IMR-90 (cell line): ENCODE measurements at regions of chr7 and their contacts with region 1.

Region 1: DNA sequence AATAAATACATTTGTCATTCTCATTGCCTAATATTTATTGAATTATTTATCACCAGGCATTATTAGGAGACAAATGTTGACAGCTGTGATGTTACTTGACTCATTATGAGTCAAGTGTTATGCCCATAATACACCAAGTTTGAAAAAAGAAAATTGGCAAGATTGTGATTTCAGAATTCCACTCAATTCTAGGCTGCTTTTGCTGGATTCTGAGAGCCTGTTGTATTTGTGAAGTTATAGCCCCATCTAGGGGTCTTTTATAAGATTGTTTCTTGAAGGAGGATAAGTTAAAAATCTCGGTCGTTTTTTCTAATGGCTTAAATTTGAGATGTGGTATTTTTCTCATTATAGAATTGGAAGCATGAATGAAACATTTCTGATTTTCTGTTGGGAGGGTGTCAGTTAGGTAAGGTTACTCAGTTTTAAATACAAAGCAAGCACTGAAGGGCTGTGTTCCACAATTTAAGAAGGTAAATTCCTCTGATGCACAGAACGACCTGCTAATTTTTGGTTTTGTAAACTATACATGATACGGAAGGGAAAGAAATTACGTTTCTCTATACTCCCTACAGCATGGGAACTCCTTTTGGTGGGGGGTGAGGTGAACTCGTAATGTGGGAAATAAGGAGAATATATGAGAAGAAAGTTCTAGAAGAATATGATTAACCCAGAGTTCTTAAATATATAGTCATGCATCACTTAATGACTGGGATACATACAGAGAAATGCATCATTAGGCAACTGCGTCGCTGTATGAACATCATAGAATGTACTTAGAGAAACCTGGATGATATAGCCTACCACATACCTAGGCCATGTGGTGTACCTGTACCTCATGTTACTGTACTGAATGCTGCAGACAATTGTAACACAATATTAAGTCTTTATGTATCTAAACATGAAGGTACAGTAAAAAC is 2.6 kb downstream of the STK31 start:
- DNase-seq: peak; percentile 78
- ATAC-seq: peak; percentile 24; the same call in 1 of the 2 replicates
- H3K4me3 ChIP-seq: no peak overlapping the region
- H3K27ac ChIP-seq: no peak overlapping the region
- H3K4me1 ChIP-seq: peaks cover 2% of the 10 kb centered on the region; the same call in 1 of the 2 replicates
- H3K27me3 ChIP-seq: no peaks in the 10 kb centered on the region
- CTCF ChIP-seq: peak; percentile 87
- POLR2A ChIP-seq: no peak
- RAD21 ChIP-seq: peak; percentile 92

Region 2: DNA sequence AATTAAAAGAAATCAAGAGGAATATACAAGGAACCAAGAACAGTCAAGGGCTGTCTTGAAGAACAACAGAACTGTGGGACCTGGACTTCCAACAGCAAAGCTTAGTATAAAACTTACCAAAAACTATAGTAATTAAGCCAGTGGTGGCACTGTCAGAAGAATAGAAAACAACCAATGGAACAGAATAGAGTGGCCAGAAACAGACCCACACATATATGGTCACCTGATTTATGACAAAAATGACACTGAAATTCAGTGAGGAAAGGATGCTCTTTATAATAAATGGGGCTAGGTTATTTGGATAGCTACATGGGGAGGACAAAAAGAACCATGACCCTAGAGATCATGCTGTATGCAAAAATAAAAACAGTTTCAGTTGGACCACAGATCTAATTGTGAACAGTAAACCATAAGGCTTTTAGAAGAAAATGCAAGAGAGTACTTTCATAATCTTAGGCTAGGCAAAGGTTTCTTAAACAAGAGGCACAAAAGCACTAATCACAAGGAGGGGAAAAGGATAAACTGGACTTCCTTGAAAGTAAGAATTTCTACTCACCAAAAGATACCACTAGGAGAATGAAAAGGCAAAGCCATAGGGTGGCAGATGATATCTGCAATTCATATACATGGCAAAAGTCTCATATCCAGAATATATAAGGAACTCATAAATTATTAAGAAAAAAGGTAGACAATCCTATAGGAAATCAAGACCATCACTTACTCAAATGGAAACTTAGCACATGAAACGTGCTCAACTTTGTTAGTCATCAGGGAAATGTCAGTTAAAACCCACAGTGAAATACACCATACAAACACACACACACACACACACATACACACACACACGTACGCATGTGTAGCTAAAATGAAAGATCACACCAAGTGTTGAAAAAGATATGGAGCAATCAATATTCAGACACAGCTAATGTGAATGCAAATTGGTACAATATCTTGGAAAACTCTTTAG is 719.5 kb before region 1 on chr7:
- CTCF ChIA-PET with region 1: no interaction called
- POLR2A ChIA-PET with region 1: no interaction called
- dilution Hi-C with region 1: no loop called
- in situ Hi-C with region 1: no loop called
- intact Hi-C with region 1: no loop called
- DNase-seq: no peak
- ATAC-seq: no peak
- H3K4me3 ChIP-seq: no peak overlapping the region
- H3K27ac ChIP-seq: no peak overlapping the region
- H3K4me1 ChIP-seq: peaks cover 3% of the 10 kb centered on the region; the same call in 1 of the 2 replicates
- H3K27me3 ChIP-seq: no peaks in the 10 kb centered on the region
- CTCF ChIP-seq: no peak
- POLR2A ChIP-seq: no peak
- RAD21 ChIP-seq: no peak

Region 3: DNA sequence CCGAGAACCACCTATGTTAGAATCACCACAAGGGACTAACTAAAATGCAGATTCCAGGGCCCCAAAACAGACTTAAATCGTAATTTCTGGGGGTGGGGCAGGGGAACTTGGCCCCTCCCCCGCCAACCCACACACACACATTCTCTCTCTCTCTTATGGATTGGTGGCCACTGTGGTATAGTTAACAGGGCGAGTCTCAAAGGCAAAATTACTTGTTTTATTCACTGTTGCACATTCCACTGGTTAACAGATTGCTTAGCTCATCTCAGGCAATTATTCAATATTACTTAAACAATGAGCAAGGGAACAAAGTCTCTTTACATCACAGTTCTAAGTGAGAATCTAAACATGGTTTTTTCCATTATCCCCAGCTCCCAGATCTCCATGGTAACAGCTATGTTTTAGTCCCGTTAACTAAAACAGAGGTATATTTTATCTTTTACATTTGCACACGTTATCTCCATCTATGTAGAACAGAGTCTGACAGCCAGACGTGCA is 280.9 kb before region 1 on chr7:
- CTCF ChIA-PET with region 1: no interaction called
- POLR2A ChIA-PET with region 1: no interaction called
- dilution Hi-C with region 1: no loop called
- in situ Hi-C with region 1: no loop called
- intact Hi-C with region 1: no loop called
- DNase-seq: peak; percentile 38
- ATAC-seq: 0 out of 2 replicates have a peak, but pooled peaks have one; percentile 5
- H3K4me3 ChIP-seq: no peak overlapping the region
- H3K27ac ChIP-seq: no peak overlapping the region
- H3K4me1 ChIP-seq: peaks cover 13% of the 10 kb centered on the region
- H3K27me3 ChIP-seq: no peaks in the 10 kb centered on the region
- CTCF ChIP-seq: no peak
- POLR2A ChIP-seq: no peak
- RAD21 ChIP-seq: no peak

Region 4: DNA sequence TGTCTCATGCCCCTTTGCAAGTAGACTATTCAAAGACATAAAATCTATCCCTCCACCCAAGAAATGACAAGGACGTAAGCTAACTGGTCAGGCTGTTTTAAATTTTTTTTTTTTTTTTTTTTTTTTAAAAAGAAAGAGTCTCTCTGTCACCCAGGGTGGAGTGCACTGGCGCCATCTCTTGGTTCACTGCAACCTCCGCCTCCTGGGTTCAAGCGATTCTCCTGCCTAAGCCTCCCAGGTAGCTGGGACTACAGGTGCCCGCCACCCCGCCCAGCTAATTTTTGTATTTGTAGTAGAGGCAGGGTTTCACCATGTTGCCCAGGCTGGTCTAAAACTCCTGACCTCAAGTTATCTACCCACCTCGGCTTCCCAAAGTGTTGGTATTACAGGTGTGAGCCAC is 192.0 kb before region 1 on chr7:
- CTCF ChIA-PET with region 1: no interaction called
- POLR2A ChIA-PET with region 1: no interaction called
- dilution Hi-C with region 1: no loop called
- in situ Hi-C with region 1: no loop called
- intact Hi-C with region 1: no loop called
- DNase-seq: no peak
- ATAC-seq: no peak
- H3K4me3 ChIP-seq: no peak overlapping the region
- H3K27ac ChIP-seq: no peak overlapping the region
- H3K4me1 ChIP-seq: peaks cover 3% of the 10 kb centered on the region
- H3K27me3 ChIP-seq: no peaks in the 10 kb centered on the region
- CTCF ChIP-seq: 0 out of 2 replicates have a peak, but pooled peaks have one; percentile 17
- POLR2A ChIP-seq: no peak
- RAD21 ChIP-seq: peak; percentile 14

Region 5: DNA sequence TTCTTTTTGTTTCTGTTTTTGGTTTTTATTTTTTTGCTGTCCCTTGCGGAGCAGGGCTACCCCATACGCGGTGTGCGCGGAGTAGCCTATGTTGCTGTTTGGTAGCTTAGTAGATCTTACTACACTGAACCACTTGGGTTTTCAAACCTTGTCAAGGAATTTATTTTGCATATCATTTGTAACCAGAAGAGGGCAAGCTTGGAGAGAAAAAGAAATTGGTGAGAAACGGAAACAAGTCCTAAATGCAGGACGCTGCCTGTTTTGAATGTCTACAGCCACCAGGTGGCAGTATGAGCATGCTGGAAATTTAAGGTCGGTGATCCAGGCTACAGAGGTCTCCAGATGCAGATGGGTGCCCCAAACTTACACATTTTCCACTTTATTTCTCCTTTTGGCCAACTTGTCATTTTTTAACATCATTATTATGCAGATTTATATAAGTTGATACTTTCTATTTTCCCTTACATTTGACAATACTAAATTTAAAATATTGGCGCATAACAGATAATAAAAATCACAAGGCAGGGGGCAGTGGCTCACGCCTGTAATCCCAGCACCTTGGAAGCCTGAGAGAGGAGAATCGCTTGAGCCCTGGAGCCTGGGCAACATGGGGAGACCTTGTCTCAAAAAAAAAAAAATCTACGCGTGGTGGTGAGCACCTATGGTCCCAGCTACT is 165.6 kb before region 1 on chr7:
- CTCF ChIA-PET with region 1: interaction called, 12 read pairs
- POLR2A ChIA-PET with region 1: no interaction called
- dilution Hi-C with region 1: no loop called
- in situ Hi-C with region 1: no loop called
- intact Hi-C with region 1: loop called (anchors 1 kb)
- DNase-seq: peak; percentile 91
- ATAC-seq: peak; percentile 96
- H3K4me3 ChIP-seq: no peak overlapping the region
- H3K27ac ChIP-seq: no peak overlapping the region
- H3K4me1 ChIP-seq: no peaks in the 10 kb centered on the region
- H3K27me3 ChIP-seq: peaks cover 2% of the 10 kb centered on the region; the same call in 1 of the 2 replicates
- CTCF ChIP-seq: peak; percentile 98
- POLR2A ChIP-seq: no peak
- RAD21 ChIP-seq: peak; percentile 87

Region 6: GRCh38 chr7:23570592-23571200 is 141.9 kb before region 1 on chr7:
- CTCF ChIA-PET with region 1: interaction called, 14 read pairs
- POLR2A ChIA-PET with region 1: no interaction called
- dilution Hi-C with region 1: loop called (anchors 25 kb)
- in situ Hi-C with region 1: loop called (anchors 5 kb)
- intact Hi-C with region 1: loop called (anchors 1 kb)
- DNase-seq: peak; percentile 76
- ATAC-seq: peak; percentile 100
- H3K4me3 ChIP-seq: no peak overlapping the region
- H3K27ac ChIP-seq: no peak overlapping the region
- H3K4me1 ChIP-seq: no peaks in the 10 kb centered on the region
- H3K27me3 ChIP-seq: no peaks in the 10 kb centered on the region
- CTCF ChIP-seq: peak; percentile 96
- POLR2A ChIP-seq: peak; percentile 48
- RAD21 ChIP-seq: peak; percentile 98

Region 7: GRCh38 chr7:23597094-23598091 is 115.2 kb before region 1 on chr7 and contains the start of gene CCDC126:
- CTCF ChIA-PET with region 1: no interaction called
- POLR2A ChIA-PET with region 1: no interaction called
- dilution Hi-C with region 1: loop called (anchors 25 kb)
- in situ Hi-C with region 1: no loop called
- intact Hi-C with region 1: no loop called
- DNase-seq: peak; percentile 87
- ATAC-seq: peak; percentile 96
- H3K4me3 ChIP-seq: peak within 1 kb of the TSS; percentile 83
- H3K27ac ChIP-seq: peak within 1 kb of the TSS; percentile 83
- H3K4me1 ChIP-seq: peaks cover 4% of the 10 kb centered on the region
- H3K27me3 ChIP-seq: peaks cover 4% of the 10 kb centered on the region; the same call in 1 of the 2 replicates
- CTCF ChIP-seq: no peak
- POLR2A ChIP-seq: peak; percentile 59; the same call in 1 of the 2 replicates
- RAD21 ChIP-seq: no peak
- total RNA-seq, gene CCDC126: 5.6 and 10.6 TPM in 2 replicates

Region 8: DNA sequence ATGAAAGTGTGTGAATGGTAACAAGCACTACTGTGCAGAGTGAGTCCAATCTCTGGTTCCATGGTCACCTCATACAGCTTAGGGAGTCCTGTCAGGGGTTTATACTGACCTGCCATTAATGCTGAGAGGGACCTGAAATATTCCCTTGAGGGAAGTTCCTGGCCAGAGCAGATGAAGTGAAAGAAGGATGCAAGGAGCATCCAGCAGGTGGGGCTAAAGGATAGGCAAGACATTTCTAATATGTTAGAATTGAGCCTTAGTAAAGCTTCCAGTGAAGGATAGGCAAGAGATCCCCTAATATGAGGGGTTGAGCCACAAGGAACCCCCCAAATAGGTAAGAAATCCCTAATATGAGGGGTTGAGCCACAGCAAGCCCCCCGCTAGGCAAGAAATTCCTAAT is 58.1 kb before region 1 on chr7:
- CTCF ChIA-PET with region 1: interaction called, 3 read pairs
- POLR2A ChIA-PET with region 1: no interaction called
- dilution Hi-C with region 1: no loop called
- in situ Hi-C with region 1: no loop called
- intact Hi-C with region 1: loop called (anchors 5 kb)
- DNase-seq: peak; percentile 31
- ATAC-seq: no peak
- H3K4me3 ChIP-seq: no peak overlapping the region
- H3K27ac ChIP-seq: no peak overlapping the region
- H3K4me1 ChIP-seq: no peaks in the 10 kb centered on the region
- H3K27me3 ChIP-seq: no peaks in the 10 kb centered on the region
- CTCF ChIP-seq: peak; percentile 41
- POLR2A ChIP-seq: no peak
- RAD21 ChIP-seq: peak; percentile 63

Region 9: DNA sequence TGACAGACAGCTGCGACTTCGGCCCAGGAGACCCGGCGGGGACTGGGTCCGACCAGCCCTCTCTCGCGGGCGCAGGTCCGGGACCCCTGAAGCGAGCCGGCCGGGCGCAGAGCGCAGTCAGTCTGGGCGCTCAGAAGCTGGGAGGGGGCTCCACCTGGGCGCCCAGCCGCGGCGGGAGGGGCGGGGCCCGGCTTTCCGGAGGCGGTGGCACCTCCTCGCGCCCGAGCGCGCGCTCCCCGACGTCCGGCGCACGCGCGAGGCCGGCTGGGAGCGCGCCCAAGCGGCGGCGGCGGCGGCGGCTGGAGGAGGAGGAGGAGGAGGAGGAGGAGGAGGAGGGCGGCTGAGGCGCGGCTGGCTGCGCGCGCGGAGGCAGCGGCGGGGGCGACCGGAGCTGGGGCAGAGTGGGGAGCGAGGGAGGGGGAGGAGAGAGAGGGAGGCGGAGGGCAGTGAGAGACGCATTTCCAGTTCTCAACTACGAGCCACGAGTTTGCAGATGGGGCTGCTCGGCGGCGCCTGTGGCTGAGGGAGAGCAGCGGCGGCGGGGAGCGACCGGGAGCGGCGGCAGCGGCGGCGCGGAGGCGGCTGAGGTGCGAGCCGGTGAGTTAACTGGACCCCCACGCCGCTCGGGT is 860.5 kb after region 1 on chr7 and contains the start of gene PALS2:
- CTCF ChIA-PET with region 1: no interaction called
- POLR2A ChIA-PET with region 1: no interaction called
- dilution Hi-C with region 1: no loop called
- in situ Hi-C with region 1: no loop called
- intact Hi-C with region 1: loop called (anchors 10 kb)
- DNase-seq: peak; percentile 58
- ATAC-seq: peak; percentile 76
- H3K4me3 ChIP-seq: peak within 1 kb of the TSS; percentile 98
- H3K27ac ChIP-seq: peak within 1 kb of the TSS; percentile 65
- H3K4me1 ChIP-seq: 0 out of 2 replicates have a peak, but pooled peaks cover 2% of the 10 kb centered on the region
- H3K27me3 ChIP-seq: peaks cover 26% of the 10 kb centered on the region
- CTCF ChIP-seq: no peak
- POLR2A ChIP-seq: no peak
- RAD21 ChIP-seq: no peak
- total RNA-seq, gene PALS2: 15.4 and 29.7 TPM in 2 replicates